GM12878 (cell line): ENCODE measurements at regions of chr16 and their contacts with region 1.

Region 1: DNA sequence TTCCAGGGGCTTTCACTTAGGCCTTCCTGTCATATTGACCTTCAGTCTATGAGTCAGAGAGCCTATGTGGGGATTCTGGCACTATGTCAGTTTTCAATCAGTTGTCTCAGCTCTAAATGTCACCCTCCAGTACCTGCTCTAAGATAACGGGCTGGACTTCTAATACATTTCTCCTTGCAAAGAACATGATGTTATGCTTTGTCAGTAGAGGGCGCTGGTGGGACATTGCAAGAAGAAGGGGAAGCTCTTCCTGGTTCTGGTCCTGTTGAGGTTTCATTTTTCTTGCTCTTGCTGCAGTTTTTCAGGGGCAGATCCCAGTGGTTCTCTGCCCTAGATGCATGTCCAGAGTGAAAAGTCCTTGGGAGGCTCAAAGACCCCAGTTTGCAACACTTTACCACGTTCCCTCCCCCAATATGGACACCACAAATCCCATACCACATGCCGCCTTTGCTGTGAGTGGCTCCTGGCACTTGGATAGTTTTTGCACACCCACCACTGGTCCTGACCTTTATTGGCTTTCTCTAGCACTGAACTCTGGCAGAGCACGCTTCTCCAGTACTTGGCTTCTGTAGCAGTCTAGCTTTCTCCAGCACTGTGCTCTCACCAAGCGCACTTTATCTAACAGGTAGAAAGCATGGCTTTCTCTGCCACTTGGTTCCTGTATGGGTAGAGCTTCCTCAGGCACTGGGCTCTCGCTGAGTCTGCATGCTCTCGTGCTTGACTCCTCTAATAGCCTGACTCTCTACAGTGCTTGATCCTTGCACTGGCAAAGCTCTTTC is 49.0 kb downstream of the BCL7C start:
- DNase-seq: peak; percentile 61
- ATAC-seq: peak; percentile 97
- H3K4me3 ChIP-seq: no peak overlapping the region
- H3K27ac ChIP-seq: no peak overlapping the region
- H3K4me1 ChIP-seq: peaks cover 5% of the 10 kb centered on the region
- H3K27me3 ChIP-seq: no peaks in the 10 kb centered on the region
- CTCF ChIP-seq: peak; percentile 89 to 95 (median 93); a peak in 5 of 6 replicates
- EP300 ChIP-seq: no peak
- POLR2A ChIP-seq: no peak
- RAD21 ChIP-seq: peak; percentile 99

Region 2: DNA sequence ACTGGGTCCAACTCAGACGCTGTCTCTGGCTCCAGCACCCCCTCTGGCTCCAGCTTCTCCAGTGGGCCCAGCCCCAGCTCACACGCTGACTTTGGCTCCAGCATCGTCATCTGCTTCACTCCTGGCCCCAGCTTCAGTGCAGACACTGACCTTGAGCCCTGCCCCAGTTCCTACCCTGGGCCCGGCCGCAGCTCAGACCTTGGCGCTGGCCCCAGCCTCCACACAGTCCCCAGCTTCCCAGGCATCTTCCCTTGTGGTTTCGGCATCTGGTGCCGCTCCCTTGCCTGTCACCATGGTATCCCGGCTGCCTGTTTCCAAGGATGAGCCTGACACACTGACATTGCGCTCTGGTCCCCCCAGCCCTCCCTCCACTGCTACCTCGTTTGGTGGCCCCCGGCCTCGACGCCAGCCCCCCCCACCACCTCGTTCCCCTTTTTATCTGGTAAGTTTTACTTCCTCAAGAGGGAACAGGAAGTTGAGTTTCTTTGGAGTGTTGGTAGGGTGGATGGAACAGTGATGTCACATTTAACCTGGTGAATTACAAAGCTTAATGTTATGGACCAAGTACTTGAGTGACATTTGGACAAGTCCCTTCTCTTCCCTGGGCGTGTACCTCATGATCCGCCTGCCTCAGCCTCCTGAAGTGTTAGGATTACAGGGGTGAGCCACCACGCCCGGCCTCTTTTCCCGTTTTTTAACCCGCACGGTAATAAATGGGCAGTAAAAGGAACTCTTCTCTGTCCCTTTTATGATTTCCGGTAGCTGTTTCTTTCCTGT is 120.0 kb before region 1 on chr16:
- CTCF ChIA-PET with region 1: no interaction called
- POLR2A ChIA-PET with region 1: no interaction called
- RAD21 ChIA-PET with region 1: no interaction called
- SMC1A ChIA-PET with region 1: no interaction called
- in situ Hi-C with region 1: no loop called
- intact Hi-C with region 1: no loop called
- DNase-seq: no peak
- ATAC-seq: no peak
- H3K4me3 ChIP-seq: no peak overlapping the region
- H3K27ac ChIP-seq: no peak overlapping the region
- H3K4me1 ChIP-seq: no peaks in the 10 kb centered on the region
- H3K27me3 ChIP-seq: no peaks in the 10 kb centered on the region
- CTCF ChIP-seq: no peak
- EP300 ChIP-seq: no peak
- POLR2A ChIP-seq: peak; percentile 56; the same call in 1 of the 2 replicates
- RAD21 ChIP-seq: no peak

Region 3: GRCh38 chr16:30813821-30814189 is 31.1 kb before region 1 on chr16:
- CTCF ChIA-PET with region 1: interaction called, 26 read pairs
- POLR2A ChIA-PET with region 1: interaction called, 5 read pairs
- RAD21 ChIA-PET with region 1: interaction called, 9 read pairs
- SMC1A ChIA-PET with region 1: interaction called, 12 read pairs
- in situ Hi-C with region 1: no loop called
- intact Hi-C with region 1: no loop called
- DNase-seq: peak; percentile 7
- ATAC-seq: no peak; the same call in 2 of the 3 replicates
- H3K4me3 ChIP-seq: peak overlapping the region; percentile 58
- H3K27ac ChIP-seq: peak overlapping the region; percentile 84
- H3K4me1 ChIP-seq: peaks cover 9% of the 10 kb centered on the region
- H3K27me3 ChIP-seq: no peaks in the 10 kb centered on the region
- CTCF ChIP-seq: no peak
- EP300 ChIP-seq: no peak
- POLR2A ChIP-seq: no peak
- RAD21 ChIP-seq: no peak

Region 4: GRCh38 chr16:30874821-30875717 is 30.2 kb after region 1 on chr16:
- CTCF ChIA-PET with region 1: interaction called, 22 read pairs
- POLR2A ChIA-PET with region 1: interaction called, 10 read pairs
- RAD21 ChIA-PET with region 1: interaction called, 44 read pairs
- SMC1A ChIA-PET with region 1: interaction called, 41 read pairs
- in situ Hi-C with region 1: no loop called
- intact Hi-C with region 1: no loop called
- DNase-seq: peak; percentile 64
- ATAC-seq: peak; percentile 87
- H3K4me3 ChIP-seq: peak overlapping the region; percentile 76
- H3K27ac ChIP-seq: peak overlapping the region; percentile 93
- H3K4me1 ChIP-seq: peaks cover 22% of the 10 kb centered on the region
- H3K27me3 ChIP-seq: no peaks in the 10 kb centered on the region
- CTCF ChIP-seq: no peak
- EP300 ChIP-seq: no peak
- POLR2A ChIP-seq: peak; percentile 99
- RAD21 ChIP-seq: no peak

Region 5: DNA sequence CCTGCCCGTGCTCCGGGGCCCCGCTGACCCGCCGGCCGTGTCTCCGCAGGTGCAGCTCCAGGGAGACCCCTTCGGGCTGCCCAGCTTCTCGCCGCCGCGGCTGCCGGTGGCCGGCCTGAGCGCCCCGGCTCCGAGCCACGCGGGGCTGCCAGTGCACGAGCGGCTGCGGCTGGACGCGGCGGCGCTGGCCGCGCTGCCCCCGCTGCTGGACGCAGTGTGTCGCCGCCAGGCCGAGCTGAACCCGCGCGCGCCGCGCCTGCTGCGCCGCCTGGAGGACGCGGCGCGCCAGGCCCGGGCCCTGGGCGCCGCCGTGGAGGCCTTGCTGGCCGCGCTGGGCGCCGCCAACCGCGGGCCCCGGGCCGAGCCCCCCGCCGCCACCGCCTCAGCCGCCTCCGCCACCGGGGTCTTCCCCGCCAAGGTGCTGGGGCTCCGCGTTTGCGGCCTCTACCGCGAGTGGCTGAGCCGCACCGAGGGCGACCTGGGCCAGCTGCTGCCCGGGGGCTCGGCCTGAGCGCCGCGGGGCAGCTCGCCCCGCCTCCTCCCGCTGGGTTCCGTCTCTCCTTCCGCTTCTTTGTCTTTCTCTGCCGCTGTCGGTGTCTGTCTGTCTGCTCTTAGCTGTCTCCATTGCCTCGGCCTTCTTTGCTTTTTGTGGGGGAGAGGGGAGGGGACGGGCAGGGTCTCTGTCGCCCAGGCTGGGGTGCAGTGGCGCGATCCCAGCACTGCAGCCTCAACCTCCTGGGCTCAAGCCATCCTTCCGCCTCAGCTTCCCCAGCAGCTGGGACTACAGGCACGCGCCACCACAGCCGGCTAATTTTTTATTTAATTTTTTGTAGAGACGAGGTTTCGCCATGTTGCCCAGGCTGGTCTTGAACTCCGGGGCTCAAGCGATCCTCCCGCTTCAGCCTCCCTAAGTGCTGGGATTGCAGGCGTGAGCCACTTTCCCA is 57.4 kb after region 1 on chr16:
- CTCF ChIA-PET with region 1: interaction called, 174 read pairs
- POLR2A ChIA-PET with region 1: interaction called, 13 read pairs
- RAD21 ChIA-PET with region 1: interaction called, 88 read pairs
- SMC1A ChIA-PET with region 1: interaction called, 146 read pairs
- in situ Hi-C with region 1: no loop called
- intact Hi-C with region 1: loop called (anchors 1 kb)
- DNase-seq: no peak
- ATAC-seq: peak; percentile 90
- H3K4me3 ChIP-seq: peak overlapping the region; percentile 58; the same call in 1 of the 2 replicates
- H3K27ac ChIP-seq: peak overlapping the region; percentile 46; the same call in 1 of the 2 replicates
- H3K4me1 ChIP-seq: peaks cover 27% of the 10 kb centered on the region
- H3K27me3 ChIP-seq: no peaks in the 10 kb centered on the region
- CTCF ChIP-seq: peak; percentile 14 to 59 (median 37); a peak in 3 of 6 replicates
- EP300 ChIP-seq: no peak
- POLR2A ChIP-seq: peak; percentile 70
- RAD21 ChIP-seq: peak; percentile 46

Region 6: DNA sequence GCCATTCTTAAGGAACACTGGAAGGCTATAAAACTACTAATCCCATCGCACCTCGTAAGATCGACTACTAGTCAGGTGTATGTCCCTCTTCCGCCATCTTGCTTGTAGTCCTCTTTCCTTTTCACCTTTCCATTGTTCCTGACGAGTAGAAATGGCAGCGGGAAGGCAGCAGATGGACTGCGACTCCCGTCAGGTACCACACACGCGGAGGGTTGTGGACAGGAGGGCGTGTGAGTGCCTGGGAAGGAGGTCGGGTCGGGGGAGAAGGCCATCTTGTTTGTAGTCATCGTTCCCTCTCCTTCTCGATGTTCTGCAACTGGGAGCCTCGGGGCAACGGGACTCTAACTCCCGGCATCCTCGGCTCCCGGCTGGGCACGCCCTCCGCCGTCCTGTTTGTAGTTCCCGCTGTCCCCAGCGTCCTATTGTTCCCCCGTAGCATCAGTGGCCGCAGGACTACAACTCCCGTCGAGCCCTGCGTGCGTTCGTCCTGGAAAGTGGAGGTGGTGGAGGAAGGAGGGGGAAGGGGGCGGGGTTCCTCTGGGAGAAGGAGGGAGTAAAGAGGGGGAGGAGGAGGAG is 78.2 kb after region 1 on chr16:
- CTCF ChIA-PET with region 1: interaction called, 25 read pairs
- POLR2A ChIA-PET with region 1: no interaction called
- RAD21 ChIA-PET with region 1: interaction called, 7 read pairs
- SMC1A ChIA-PET with region 1: interaction called, 24 read pairs
- in situ Hi-C with region 1: loop called (anchors 5 kb)
- intact Hi-C with region 1: loop called (anchors 1 kb)
- DNase-seq: peak; percentile 98
- ATAC-seq: peak; percentile 82
- H3K4me3 ChIP-seq: peak overlapping the region; percentile 80
- H3K27ac ChIP-seq: peak overlapping the region; percentile 89
- H3K4me1 ChIP-seq: peaks cover 4% of the 10 kb centered on the region; the same call in 1 of the 2 replicates
- H3K27me3 ChIP-seq: no peaks in the 10 kb centered on the region
- CTCF ChIP-seq: no peak
- EP300 ChIP-seq: no peak
- POLR2A ChIP-seq: peak; percentile 72
- RAD21 ChIP-seq: no peak